ENCODE measurements at regions of chr11 and their contacts with region 1.

Region 1: DNA sequence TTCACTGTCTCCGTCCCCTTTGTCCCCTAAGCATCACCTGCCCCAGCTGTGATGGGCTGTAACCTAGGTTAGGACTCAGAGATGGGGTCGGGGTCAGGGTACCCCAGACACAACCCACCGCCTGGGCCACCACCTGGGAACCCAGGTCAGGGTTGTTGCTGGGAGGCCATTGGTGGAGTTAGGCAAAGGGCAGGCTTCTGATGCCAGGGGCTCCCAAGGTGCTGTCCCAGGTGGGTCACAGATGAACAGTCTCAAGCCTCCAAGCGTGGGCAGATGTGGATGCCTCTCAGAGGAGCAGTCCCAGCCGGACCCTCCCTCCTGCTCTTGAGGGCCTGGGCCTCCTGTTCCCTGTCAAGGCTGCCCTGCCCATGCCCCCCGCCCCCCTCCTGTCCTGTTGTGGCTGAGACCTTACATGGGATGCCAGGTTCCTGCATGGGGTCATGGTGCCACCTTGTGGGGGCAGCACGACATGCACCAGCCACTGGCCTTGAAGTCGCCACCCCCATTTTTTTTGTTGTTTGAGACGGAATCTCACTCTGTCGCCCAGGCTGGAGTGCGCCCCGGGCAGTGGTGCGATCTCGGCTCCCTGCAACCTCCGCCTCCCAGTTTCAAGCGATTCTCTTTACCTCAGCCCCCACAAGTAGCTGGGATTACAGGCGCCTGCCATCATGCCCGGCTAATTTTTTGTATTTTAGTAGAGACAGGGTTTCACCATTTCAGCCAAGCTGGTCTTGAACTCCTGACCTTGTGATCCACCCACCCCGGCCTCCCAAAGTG is 12.1 kb downstream of the GATD1 start:
- DNase-seq: peak in 8 of 10 donors; percentile 44 to 78 (median 70)
- H3K4me3 ChIP-seq: no peak overlapping the region
- H3K27ac ChIP-seq: peak overlapping the region in 52 of 59 donors; percentile 4 to 84 (median 59)
- H3K27me3 ChIP-seq: no peaks in the 10 kb centered on the region
- CTCF ChIP-seq: peak in 54 of 56 donors; percentile 19 to 82 (median 66)

Region 2: GRCh38 chr11:662689-663274 is 102.4 kb before region 1 on chr11:
- intact Hi-C with region 1: loop called in 1 of 2 experiments (anchors 5 kb)
- DNase-seq: peak in 9 of 10 donors; percentile 50 to 79 (median 69)
- H3K4me3 ChIP-seq: no peak overlapping the region
- H3K27ac ChIP-seq: no peak overlapping the region
- H3K27me3 ChIP-seq: no peaks in the 10 kb centered on the region
- CTCF ChIP-seq: peak; percentile 35 to 93 (median 79)

Region 3: GRCh38 chr11:747158-748006 is 17.8 kb before region 1 on chr11 and contains the start of gene TALDO1:
- intact Hi-C with region 1: loop called in 1 of 2 experiments (anchors 2 kb)
- DNase-seq: peak; percentile 87 to 98 (median 93)
- H3K4me3 ChIP-seq: peak within 1 kb of the TSS; percentile 72 to 99 (median 96)
- H3K27ac ChIP-seq: peak within 1 kb of the TSS; percentile 89 to 99 (median 97)
- H3K27me3 ChIP-seq: no peaks in the 10 kb centered on the region
- CTCF ChIP-seq: peak in 49 of 56 donors; percentile 11 to 62 (median 32)
- total RNA-seq, gene TALDO1: 58.9 to 258 (median 114) TPM

Region 4: GRCh38 chr11:859509-860131 is 94.4 kb after region 1 on chr11:
- intact Hi-C with region 1: no loop called
- DNase-seq: peak; percentile 64 to 93 (median 87)
- H3K4me3 ChIP-seq: peak overlapping the region in 56 of 59 donors; percentile 9 to 66 (median 47)
- H3K27ac ChIP-seq: peak overlapping the region in 27 of 59 donors; percentile 1 to 77 (median 49)
- H3K27me3 ChIP-seq: peaks cover 0 to 10% (median 0%) of the 10 kb centered on the region in 45 donors
- CTCF ChIP-seq: no peak

Measured in dorsolateral prefrontal cortex (tissue), 120 donors.